Psoas muscle (tissue), 8 donors: ENCODE measurements at regions of chr18 and their contacts with region 1.

Region 1: DNA sequence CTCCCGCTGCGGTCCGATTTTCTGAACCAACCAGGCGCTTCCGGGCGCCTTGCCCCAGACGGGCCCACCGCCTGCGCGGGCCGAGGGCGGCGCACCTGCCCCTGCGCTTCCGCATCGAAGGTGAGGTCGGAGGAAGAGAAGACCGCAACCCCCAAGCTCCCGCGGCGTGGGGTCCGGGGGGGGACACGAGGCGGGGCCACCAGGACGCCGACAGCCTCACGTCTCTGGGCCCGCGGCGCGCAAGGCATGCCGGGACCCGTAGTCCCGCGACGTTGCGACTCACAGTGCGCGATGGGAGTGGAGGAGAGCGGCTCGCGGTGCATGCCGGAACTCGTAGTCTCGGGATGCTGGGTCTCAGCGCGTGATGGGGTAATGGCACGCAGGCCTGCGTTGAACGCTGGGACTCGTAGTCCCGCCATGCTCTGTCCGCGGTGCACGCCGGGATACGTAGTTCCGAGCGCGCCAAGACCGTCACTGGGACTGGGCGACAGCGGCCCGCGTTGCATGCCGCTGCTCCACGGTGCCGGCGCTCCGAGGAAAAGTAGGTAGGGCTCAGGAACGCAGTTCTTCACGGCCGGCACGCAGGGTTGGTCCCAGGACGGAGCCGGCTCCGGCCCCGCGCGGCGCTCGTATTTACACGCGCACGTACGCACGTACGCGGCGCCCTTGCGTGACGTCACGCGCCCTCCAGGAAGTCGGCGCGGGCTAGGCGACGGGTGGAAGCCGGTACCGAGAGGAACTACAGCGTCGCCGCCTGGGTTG is at the start of gene CTDP1:
- DNase-seq: peak; percentile 99
- ATAC-seq: peak; percentile 96 to 98 (median 97)
- H3K4me3 ChIP-seq: peak within 1 kb of the TSS; percentile 74
- H3K27ac ChIP-seq: peak within 1 kb of the TSS; percentile 97
- H3K4me1 ChIP-seq: peaks cover 26% of the 10 kb centered on the region
- H3K27me3 ChIP-seq: no peaks in the 10 kb centered on the region
- CTCF ChIP-seq: no peak
- total RNA-seq, gene CTDP1: 7.6 to 21.6 (median 12.6) TPM

Region 2: DNA sequence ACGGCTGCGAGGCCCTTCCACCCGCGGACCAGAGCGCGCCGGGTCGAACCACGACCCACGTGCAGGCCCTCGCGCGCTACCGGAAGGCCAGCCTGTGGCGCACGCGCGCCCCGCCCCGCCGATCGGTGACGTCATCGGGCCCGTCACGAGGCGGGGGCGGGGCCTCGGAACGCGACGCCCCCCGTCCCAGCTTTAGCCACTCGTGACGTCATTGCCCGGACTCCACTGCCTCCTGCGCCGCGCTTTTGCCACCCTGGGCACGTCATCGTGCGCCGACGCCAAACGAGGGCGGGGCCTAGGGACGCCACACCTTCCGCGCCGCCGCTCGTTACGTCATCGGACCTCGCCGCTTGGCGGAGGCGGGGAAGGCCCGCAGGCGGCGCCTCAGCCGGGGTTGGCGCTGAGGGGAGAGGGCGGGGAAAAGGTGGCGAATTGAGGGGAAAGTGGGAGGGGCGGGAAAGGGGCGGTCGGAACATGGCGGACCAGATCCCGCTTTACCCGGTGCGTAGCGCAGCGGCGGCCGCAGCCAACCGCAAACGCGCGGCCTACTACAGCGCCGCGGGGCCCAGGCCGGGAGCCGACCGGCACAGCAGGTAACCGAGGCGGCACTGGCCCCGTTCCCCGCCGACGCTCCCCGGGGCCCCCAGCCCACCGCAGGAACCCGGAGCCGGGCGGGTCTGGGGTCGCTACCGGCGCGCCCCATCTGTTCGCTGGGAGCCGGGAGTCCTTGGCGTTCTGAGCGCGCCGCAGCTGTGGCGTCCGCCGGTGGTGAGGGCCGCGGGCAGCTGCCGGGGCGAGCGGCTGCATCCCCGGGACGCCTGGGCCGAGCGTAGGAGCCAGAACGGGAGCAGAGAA is 610.1 kb before region 1 on chr18 and contains the start of gene ATP9B:
- intact Hi-C with region 1: loop called in 1 of 2 experiments (anchors 5 kb)
- DNase-seq: peak; percentile 96 to 99
- ATAC-seq: peak; percentile 95 to 97 (median 96)
- H3K4me3 ChIP-seq: peak within 1 kb of the TSS; percentile 98
- H3K27ac ChIP-seq: peak within 1 kb of the TSS; percentile 99
- H3K4me1 ChIP-seq: peaks cover 20% of the 10 kb centered on the region
- H3K27me3 ChIP-seq: no peaks in the 10 kb centered on the region
- CTCF ChIP-seq: no peak
- total RNA-seq, gene ATP9B: 9.8 to 22.1 (median 14.4) TPM

Region 3: DNA sequence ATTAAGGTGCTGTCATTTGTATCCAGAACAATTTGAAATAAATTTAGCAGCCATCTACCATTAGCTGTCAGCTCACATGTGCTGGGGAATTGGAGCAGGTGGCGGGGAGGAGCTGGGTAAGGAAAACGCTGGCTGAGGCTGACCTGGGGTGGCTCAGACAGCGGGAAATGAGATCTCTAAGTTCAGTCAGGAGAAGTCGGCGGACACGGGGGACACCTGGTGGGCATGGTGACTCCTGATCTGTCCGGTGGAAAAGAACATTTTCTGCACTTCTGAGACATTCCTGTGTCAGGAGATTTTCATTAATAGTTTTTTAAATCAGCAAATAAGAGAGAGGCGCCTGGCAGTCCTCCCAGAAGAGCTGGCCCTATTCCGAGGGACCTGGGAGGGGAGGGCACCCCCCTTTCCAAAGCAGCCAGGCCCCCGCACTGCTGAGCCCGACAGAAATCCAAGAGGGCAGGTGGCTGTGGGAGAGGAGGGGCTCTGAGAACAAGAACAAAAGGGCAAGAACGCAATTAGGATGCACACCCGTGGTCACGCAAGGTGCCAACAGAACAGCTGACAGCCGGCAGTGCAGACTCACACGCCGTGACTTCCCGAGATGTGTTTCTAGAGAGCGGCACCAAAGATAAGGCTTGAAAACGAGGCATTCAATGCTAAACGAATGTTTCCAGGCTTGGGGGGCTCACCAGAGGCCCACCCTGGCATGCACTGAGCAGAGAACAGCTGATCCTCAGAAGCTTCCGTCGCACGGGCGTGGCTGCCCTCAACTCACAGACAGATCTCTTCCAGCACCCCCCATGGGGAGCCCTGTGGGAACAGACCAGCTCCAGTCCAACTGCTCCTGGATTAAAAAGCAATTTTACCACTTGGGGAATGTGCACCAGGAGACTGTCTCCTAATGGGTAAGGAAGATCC is 245.8 kb after region 1 on chr18:
- intact Hi-C with region 1: loop called in 1 of 2 experiments (anchors 10 kb)
- DNase-seq: peak; percentile 65 to 85
- ATAC-seq: peak; percentile 88 to 94 (median 90)
- H3K4me3 ChIP-seq: peak overlapping the region; percentile 53
- H3K27ac ChIP-seq: peak overlapping the region; percentile 86
- H3K4me1 ChIP-seq: peaks cover 30% of the 10 kb centered on the region
- H3K27me3 ChIP-seq: no peaks in the 10 kb centered on the region
- CTCF ChIP-seq: peak; percentile 30

Region 4: GRCh38 chr18:79944126-79944741 is 264.9 kb after region 1 on chr18:
- intact Hi-C with region 1: loop called in 1 of 2 experiments (anchors 10 kb)
- DNase-seq: peak in 1 of 2 donors; percentile 45
- ATAC-seq: peak in 1 of 4 donors; percentile 26
- H3K4me3 ChIP-seq: no peak overlapping the region
- H3K27ac ChIP-seq: no peak overlapping the region
- H3K4me1 ChIP-seq: peaks cover 45% of the 10 kb centered on the region
- H3K27me3 ChIP-seq: no peaks in the 10 kb centered on the region
- CTCF ChIP-seq: no peak

Region 5: GRCh38 chr18:79988451-79989194 is 309.3 kb after region 1 on chr18 and contains the start of gene TXNL4A:
- intact Hi-C with region 1: loop called in 1 of 2 experiments (anchors 5 kb)
- DNase-seq: peak; percentile 89 to 93
- ATAC-seq: peak; percentile 98 to 99 (median 98)
- H3K4me3 ChIP-seq: peak within 1 kb of the TSS; percentile 96
- H3K27ac ChIP-seq: peak within 1 kb of the TSS; percentile 100
- H3K4me1 ChIP-seq: peaks cover 23% of the 10 kb centered on the region
- H3K27me3 ChIP-seq: no peaks in the 10 kb centered on the region
- CTCF ChIP-seq: no peak
- total RNA-seq, gene TXNL4A: 81.5 to 147 (median 108) TPM

Region 6: DNA sequence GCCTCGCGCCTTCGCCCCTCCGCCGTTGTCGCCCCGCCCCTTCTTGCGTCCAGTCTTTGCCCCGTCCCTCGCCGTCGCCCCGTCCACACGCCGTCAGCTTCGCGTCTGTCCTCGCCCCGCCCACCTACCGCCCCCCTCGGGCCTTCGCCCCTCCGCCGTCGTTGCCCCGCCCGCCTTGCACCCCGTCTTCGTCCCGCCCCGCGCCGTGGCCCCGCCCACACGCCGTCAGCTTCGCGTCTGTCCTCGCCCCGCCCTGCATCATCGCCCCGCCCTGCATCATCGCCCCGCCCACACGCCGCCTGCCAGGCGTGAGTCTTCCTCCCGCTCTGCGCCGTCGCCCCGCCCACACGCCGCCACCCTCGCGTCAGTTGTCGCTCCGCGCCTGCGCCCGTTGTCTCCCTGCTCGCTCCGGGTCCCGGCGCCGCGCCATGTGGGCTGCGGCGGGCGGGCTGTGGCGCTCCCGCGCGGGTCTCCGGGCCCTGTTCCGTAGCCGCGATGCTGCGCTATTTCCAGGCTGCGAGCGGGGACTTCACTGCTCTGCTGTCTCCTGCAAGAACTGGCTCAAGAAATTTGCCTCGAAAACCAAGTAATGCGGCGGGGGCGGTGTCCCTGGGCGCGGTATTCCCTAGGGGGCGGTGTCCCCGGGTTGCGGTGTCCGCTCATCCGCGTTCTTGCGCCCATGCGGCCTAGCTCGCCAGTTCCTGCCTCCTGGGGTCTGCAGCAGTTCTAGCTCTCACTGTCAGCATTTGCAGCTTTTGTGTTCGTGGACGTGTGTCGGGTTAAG is 355.0 kb after region 1 on chr18 and contains the start of gene RBFA:
- intact Hi-C with region 1: loop called (anchors 5 to 10 kb)
- DNase-seq: peak; percentile 100
- ATAC-seq: peak; percentile 93 to 95 (median 94)
- H3K4me3 ChIP-seq: peak within 1 kb of the TSS; percentile 97
- H3K27ac ChIP-seq: peak within 1 kb of the TSS; percentile 91
- H3K4me1 ChIP-seq: peaks cover 8% of the 10 kb centered on the region
- H3K27me3 ChIP-seq: no peaks in the 10 kb centered on the region
- CTCF ChIP-seq: peak; percentile 27
- total RNA-seq, gene RBFA: 17.9 to 29.0 (median 19.0) TPM